Pancreas (tissue), 10 donors: ENCODE measurements at regions of chr16 and their contacts with region 1.

Region 1: GRCh38 chr16:50644729-50645128 is 36.4 kb downstream of the SNX20 start:
- DNase-seq: peak in 3 of 6 donors; percentile 23 to 36 (median 36)
- ATAC-seq: peak; percentile 60 to 86 (median 79)
- H3K4me3 ChIP-seq: no peak overlapping the region
- H3K27ac ChIP-seq: no peak overlapping the region
- H3K4me1 ChIP-seq: no peaks in the 10 kb centered on the region
- H3K27me3 ChIP-seq: no peaks in the 10 kb centered on the region
- CTCF ChIP-seq: no peak

Region 2: DNA sequence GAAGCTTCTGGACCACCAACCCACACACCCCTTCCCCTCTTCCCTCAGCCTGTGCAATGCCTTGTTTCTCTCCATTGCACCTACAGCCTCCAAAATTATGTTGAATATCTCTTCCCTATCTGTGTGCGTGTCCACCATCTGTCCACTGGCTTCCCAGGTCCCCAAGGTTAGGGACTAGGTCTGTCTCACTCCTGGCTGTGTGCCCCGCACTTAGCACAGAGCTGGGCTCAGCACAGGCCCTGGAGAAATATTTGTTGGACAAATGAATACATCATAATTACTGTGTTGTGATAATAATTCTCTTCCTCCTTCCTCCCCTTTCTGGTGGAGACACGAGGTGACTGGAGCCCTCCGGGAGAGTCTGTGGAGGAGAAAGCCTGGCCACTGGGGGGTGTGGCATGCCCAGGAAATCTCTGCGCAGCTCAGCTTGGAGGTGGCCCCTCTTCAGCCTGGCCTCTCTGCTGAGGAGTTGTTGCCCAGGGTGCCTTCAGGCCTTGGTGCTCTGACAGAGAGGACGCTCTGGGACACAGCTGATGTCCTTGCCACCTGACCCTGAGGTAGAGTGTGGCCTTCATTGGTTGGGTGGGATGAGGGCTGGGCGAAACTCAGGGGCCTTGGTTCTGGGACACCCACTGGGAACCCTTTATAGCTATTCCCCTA is 272.7 kb before region 1 on chr16:
- intact Hi-C with region 1: loop called in 1 of 3 experiments (anchors 10 kb)
- DNase-seq: peak in 1 of 6 donors; percentile 16
- ATAC-seq: peak in 3 of 4 donors; percentile 20 to 54 (median 31)
- H3K4me3 ChIP-seq: no peak overlapping the region
- H3K27ac ChIP-seq: no peak overlapping the region
- H3K4me1 ChIP-seq: peaks cover 0 to 7% (median 5%) of the 10 kb centered on the region in 3 donors
- H3K27me3 ChIP-seq: no peaks in the 10 kb centered on the region
- CTCF ChIP-seq: no peak

Region 3: DNA sequence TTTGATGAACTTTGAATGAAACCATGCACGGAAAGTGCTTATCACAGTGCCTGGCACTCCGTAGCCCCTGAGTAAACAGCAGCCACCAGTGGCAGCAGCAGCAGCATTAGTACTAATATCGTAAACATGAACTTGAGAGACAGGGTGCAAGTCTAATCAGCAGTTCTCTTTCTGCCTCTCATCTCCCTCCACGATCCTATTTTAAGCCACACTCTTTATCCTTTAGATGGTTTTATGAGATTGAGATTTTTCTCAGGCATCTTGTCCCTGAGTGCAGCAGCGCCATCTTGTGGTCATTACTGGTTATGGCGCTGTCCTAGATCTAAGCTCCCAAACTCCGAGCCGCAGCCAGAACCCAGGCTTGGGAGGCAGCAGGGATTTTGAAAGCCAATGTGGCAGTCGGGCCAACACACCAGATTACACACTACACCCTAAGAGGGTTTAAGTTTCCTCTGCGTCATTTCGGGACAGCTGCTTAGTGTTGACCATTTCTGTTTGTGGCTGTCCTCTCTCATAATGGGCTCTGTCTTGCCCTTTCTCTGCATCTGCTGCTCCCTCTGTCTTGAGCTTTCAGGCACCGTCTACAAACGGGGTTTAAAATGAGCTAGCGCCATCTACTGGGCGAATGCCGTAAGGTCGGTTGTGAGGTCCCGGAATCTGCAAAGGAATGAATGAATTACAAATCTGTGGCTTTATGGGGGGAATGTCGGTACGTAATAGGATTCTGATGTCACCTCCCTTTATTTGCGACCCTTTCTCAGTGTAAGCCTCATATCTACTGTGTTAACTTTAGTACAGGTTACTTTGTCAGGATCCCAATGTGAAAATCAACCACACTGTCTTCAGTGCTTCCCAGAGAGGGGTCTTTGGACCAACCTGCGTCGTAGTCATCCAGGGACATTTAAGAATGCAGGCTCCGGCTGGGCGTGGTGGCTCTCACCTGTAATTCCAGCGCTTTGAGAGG is 161.7 kb after region 1 on chr16:
- intact Hi-C with region 1: no loop called
- DNase-seq: peak; percentile 69 to 88 (median 84)
- ATAC-seq: peak; percentile 95 to 98 (median 96)
- H3K4me3 ChIP-seq: peak overlapping the region in 2 of 4 donors; percentile 17 to 22
- H3K27ac ChIP-seq: peak overlapping the region in 1 of 4 donors; percentile 58
- H3K4me1 ChIP-seq: no peaks in the 10 kb centered on the region
- H3K27me3 ChIP-seq: no peaks in the 10 kb centered on the region
- CTCF ChIP-seq: peak; percentile 89 to 98 (median 93)